AG04450 (cell line): ENCODE measurements at regions of chr2 and their contacts with region 1.

Region 1: GRCh38 chr2:240851078-240851991 is 17.3 kb upstream of the AGXT start:
- DNase-seq: peak; percentile 42
- H3K4me3 ChIP-seq: no peak overlapping the region
- H3K27ac ChIP-seq: no peak overlapping the region
- H3K27me3 ChIP-seq: peaks cover 13% of the 10 kb centered on the region
- CTCF ChIP-seq: peak; percentile 96

Region 2: DNA sequence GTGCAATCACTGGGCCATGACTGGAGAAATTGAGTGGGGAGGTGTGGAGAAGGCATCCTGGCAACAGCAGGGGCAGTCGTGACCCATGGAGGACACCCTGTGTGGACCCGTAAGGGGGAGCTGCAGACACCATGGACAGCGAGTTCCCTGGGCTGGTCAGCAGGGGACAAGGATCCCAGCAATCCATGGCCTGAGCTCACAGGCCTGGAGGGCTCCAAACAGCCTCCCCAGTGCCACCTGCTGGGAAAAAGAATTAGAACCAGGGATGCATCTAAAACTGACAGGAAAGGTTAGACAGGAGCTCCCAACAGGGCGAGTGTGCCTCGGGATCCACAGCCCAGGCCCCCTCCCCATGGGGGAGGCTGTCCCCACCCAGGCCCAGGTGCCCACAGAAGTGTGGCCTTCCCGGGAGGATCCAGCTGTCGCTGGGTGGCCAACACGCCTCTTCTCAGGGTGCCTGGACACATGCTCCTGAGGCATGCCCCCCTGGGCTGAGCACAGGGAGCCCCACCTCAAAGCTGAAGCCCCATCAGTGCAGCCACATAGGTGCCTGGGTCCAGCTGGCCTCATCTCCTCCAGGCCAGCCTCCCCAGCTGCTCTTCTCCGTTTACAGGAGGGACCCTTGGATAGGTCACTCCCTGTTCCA is 10.8 kb before region 1 on chr2:
- CTCF ChIA-PET with region 1: interaction called, 22 read pairs
- POLR2A ChIA-PET with region 1: no interaction called
- DNase-seq: peak; percentile 10
- H3K4me3 ChIP-seq: no peak overlapping the region
- H3K27ac ChIP-seq: no peak overlapping the region
- H3K27me3 ChIP-seq: peaks cover 22% of the 10 kb centered on the region
- CTCF ChIP-seq: peak; percentile 78

Region 3: DNA sequence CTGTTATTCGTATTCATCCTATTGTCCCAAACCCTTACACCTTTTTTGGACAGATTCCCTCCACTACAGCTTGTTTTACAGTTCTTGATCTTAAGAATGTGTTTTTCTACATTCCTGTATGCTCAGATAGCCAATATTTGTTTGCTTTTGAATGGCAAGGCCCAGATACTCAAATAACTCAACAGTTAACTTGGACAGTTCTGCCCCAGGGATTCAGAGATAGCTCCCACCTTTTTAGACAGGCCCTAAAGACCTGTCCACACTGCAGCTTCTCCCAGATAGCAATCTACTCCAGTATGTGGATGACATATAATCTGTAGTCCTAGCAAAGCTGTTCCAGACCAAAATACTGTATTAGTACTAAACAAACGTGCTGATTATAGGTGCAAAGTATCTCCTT is 10.2 kb after region 1 on chr2:
- CTCF ChIA-PET with region 1: interaction called, 15 read pairs
- POLR2A ChIA-PET with region 1: no interaction called
- DNase-seq: no peak
- H3K4me3 ChIP-seq: no peak overlapping the region
- H3K27ac ChIP-seq: no peak overlapping the region
- H3K27me3 ChIP-seq: peaks cover 50% of the 10 kb centered on the region
- CTCF ChIP-seq: no peak

Region 4: DNA sequence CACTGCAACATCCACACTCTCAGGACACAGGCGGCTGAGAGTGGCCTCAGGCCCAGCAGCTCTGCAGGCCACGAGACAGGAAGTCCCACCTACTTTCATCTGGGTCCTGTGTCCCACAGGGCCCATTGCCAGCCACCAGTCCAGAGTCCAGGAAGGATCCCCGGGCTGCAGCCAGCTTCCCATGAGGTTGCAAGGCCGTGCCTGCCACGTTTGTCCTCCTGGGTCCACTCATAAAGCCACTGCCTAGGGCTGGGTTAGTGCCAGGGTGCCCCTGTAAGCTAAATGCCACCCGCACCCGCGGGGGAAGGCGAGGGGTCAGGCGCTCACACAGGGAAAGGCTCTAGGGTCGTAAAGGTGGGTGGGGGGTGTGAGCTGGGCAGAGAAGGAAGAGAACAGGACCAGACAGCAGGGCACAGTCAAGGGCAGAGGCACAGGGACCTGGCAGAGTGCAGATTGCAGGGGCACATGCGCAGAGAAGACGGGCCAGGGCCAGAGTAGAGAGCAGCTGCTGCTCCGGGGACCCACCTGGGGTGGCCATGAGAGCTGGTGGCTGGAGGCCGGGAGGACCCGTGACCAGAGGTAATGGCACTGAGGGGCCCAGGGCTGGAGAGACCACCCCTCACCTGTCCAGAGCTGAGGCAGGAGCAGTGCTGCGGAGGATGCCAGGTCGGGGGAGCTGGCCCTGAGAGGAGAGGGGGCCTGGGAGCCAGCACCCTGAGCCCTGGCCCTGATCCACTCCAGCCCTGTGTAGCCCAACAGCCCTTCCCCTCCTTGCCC is 25.3 kb after region 1 on chr2:
- CTCF ChIA-PET with region 1: no interaction called
- POLR2A ChIA-PET with region 1: no interaction called
- DNase-seq: no peak
- H3K4me3 ChIP-seq: no peak overlapping the region
- H3K27ac ChIP-seq: no peak overlapping the region
- H3K27me3 ChIP-seq: peaks cover 7% of the 10 kb centered on the region
- CTCF ChIP-seq: no peak

Region 5: DNA sequence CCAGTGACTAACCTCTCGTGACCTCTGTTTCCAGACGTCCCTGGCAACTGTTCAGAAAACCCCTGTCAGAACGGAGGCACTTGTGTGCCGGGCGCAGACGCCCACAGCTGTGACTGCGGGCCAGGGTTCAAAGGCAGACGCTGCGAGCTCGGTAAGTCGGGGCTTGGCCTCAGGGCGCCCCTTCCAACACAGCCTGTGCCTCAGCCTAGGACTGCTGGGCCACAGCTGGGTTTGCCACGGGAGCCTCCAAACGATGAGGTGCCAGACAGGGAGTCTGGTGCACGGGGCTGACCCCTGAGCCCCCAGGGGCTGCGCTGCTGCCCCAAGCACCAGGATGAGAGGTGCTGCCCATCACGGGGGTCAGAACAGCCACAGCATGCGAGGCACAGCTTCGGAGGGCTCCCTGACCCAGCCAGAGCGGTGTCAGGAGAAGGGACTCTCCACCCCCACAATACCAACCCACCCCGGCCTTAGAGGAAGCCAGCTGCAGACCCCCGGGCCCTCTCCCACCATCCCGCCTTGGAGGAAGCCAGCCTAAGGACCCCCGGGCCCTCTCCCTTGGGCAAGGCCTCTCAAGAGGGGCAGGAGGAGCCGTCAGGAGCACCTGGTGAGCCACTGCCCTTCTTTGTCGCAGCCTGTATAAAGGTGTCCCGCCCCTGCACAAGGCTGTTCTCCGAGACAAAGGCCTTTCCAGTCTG is 230.5 kb after region 1 on chr2:
- CTCF ChIA-PET with region 1: interaction called, 18 read pairs
- POLR2A ChIA-PET with region 1: no interaction called
- DNase-seq: no peak
- H3K4me3 ChIP-seq: no peak overlapping the region
- H3K27ac ChIP-seq: no peak overlapping the region
- H3K27me3 ChIP-seq: no peaks in the 10 kb centered on the region
- CTCF ChIP-seq: no peak